ENCODE measurements at regions of chr16 and their contacts with region 1.

Region 1: GRCh38 chr16:11255737-11256660 is at the start of gene SOCS1:
- DNase-seq: peak; percentile 94
- ATAC-seq: peak; percentile 54
- H3K4me3 Mint-ChIP-seq: peak within 1 kb of the TSS; percentile 98
- H3K27ac Mint-ChIP-seq: peak within 1 kb of the TSS; percentile 98
- H3K4me1 Mint-ChIP-seq: peaks cover 46% of the 10 kb centered on the region
- H3K27me3 Mint-ChIP-seq: no peaks in the 10 kb centered on the region
- total RNA-seq, gene SOCS1: 100.0 to 103 TPM

Region 2: GRCh38 chr16:10957771-10958486 is 298.1 kb before region 1 on chr16:
- CTCF ChIA-PET with region 1: interaction called, 34 read pairs
- POLR2A ChIA-PET with region 1: interaction called, 30 read pairs
- intact Hi-C with region 1: no loop called
- DNase-seq: peak; percentile 51
- ATAC-seq: peak; percentile 82
- H3K4me3 Mint-ChIP-seq: no peak overlapping the region
- H3K27ac Mint-ChIP-seq: peak overlapping the region; percentile 88
- H3K4me1 Mint-ChIP-seq: peaks cover 68% of the 10 kb centered on the region
- H3K27me3 Mint-ChIP-seq: no peaks in the 10 kb centered on the region

Region 3: GRCh38 chr16:11051879-11052808 is 203.9 kb before region 1 on chr16:
- CTCF ChIA-PET with region 1: interaction called, 4 read pairs
- POLR2A ChIA-PET with region 1: interaction called, 25 read pairs
- intact Hi-C with region 1: loop called (anchors 1 to 2 kb)
- DNase-seq: peak; percentile 85
- ATAC-seq: peak; percentile 89
- H3K4me3 Mint-ChIP-seq: peak overlapping the region; percentile 7
- H3K27ac Mint-ChIP-seq: peak overlapping the region; percentile 75
- H3K4me1 Mint-ChIP-seq: peaks cover 61% of the 10 kb centered on the region
- H3K27me3 Mint-ChIP-seq: no peaks in the 10 kb centered on the region

Region 4: DNA sequence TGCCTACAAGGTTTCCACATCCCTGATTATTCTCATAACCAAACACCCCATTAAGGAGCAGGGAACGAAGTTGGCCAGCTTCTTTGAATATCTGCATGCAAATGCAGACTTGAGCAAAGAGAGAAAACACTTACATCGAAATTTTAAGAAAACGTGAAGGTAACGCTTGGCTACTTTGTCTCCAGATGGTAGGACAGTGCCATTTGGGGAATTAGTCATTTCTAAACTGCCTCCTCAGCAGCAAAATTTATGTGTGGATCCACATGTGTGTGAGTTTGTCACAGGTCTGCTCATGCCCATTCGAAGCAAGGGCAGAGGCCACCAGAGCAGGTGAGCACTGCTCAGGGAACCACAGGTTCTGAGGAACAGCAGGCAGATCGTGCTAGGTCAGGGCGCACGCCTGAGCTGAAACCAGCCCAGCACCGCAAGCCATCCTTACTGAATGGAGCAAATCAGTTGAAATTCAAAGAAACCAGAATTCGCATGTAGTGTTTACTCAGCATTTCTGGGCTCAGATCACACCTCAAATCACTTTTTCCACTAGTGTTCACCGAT is 80.1 kb before region 1 on chr16:
- CTCF ChIA-PET with region 1: no interaction called
- POLR2A ChIA-PET with region 1: no interaction called
- intact Hi-C with region 1: loop called in 1 of 2 experiments (anchors 2 kb)
- DNase-seq: peak; percentile 68
- ATAC-seq: peak; percentile 86
- H3K4me3 Mint-ChIP-seq: no peak overlapping the region
- H3K27ac Mint-ChIP-seq: peak overlapping the region; percentile 90
- H3K4me1 Mint-ChIP-seq: peaks cover 41% of the 10 kb centered on the region
- H3K27me3 Mint-ChIP-seq: no peaks in the 10 kb centered on the region

Region 5: DNA sequence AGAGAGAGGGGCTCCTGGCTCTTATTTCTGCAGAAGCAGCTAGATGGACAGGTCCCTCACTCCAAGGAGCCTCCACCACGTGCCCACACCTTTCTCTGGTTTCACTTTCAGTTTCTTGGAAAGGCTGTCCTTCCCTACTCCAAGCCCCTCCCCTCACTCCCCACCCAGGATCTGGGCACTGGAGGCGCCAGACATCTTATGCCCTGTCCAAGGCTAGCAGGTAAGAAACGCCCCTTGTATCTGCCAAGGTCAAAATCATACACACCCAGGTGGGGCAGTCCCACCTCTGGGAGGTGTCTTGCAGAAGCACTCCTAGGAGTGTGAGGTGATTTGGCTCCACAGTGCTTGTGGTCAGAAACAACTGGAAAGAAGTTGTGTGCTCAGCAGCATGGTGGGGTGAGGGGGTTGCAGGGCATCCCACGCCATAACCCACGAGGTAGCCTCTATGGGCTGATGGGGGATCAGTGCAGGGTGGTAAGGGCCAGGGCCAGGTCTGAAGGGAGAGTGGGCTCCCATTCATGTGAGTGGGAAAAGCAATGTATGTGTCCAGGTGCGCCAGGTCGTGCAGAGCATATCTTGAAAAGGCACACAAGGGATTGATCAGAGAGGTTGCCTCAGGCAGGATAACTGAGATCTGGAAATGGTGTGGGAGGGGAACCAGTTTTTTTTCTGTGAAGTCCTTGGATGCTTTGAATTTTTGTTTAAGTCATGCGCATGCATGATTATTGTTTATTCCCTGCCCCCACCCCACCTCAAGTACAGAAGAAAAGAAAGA is 56.9 kb after region 1 on chr16:
- CTCF ChIA-PET with region 1: no interaction called
- POLR2A ChIA-PET with region 1: interaction called, 4 read pairs
- intact Hi-C with region 1: loop called (anchors 2 to 5 kb)
- DNase-seq: peak; percentile 47
- ATAC-seq: peak; percentile 24
- H3K4me3 Mint-ChIP-seq: no peak overlapping the region
- H3K27ac Mint-ChIP-seq: peak overlapping the region; percentile 43
- H3K4me1 Mint-ChIP-seq: peaks cover 38% of the 10 kb centered on the region
- H3K27me3 Mint-ChIP-seq: no peaks in the 10 kb centered on the region

Region 6: DNA sequence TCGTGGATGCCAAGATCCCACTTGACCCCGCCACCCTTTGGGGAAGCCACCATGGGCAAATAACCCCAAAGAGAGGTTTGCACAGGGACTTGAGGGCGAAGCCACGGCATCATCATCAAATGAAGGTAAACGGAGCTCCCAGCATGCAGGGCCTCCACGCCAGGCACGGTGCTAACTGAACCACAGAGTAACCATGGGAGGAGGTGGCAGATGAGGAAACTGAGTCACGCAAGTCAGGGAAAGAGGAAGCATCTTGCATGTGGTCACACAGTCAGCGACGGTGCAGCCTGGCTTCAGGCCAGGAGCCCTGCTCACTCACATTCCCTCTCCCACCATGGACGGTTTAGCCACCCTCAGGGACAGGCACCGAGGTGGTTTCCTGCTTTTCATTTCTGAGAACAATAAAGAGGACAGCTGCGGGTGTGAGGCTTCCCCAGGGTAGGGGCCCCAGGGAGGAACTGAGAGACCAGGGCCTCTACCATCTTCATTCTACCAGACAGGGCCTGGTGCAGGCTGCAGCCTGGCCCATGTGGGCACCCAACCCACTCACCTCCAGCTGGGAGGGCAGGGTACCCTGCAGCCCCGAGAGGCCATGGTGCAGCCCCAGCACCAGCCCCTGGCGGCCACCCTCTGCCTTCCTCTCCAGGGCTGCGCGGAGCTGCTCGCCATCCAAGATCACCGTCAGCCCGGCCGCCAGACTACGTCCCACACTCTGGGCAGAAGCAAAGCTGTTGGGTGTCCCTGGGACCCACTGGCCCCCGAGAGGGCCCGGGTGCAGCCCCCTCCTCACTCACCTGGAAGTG is 167.5 kb after region 1 on chr16:
- CTCF ChIA-PET with region 1: no interaction called
- POLR2A ChIA-PET with region 1: no interaction called
- intact Hi-C with region 1: no loop called
- DNase-seq: no peak
- ATAC-seq: no peak
- H3K4me3 Mint-ChIP-seq: no peak overlapping the region
- H3K27ac Mint-ChIP-seq: no peak overlapping the region
- H3K4me1 Mint-ChIP-seq: no peaks in the 10 kb centered on the region
- H3K27me3 Mint-ChIP-seq: no peaks in the 10 kb centered on the region

Region 7: DNA sequence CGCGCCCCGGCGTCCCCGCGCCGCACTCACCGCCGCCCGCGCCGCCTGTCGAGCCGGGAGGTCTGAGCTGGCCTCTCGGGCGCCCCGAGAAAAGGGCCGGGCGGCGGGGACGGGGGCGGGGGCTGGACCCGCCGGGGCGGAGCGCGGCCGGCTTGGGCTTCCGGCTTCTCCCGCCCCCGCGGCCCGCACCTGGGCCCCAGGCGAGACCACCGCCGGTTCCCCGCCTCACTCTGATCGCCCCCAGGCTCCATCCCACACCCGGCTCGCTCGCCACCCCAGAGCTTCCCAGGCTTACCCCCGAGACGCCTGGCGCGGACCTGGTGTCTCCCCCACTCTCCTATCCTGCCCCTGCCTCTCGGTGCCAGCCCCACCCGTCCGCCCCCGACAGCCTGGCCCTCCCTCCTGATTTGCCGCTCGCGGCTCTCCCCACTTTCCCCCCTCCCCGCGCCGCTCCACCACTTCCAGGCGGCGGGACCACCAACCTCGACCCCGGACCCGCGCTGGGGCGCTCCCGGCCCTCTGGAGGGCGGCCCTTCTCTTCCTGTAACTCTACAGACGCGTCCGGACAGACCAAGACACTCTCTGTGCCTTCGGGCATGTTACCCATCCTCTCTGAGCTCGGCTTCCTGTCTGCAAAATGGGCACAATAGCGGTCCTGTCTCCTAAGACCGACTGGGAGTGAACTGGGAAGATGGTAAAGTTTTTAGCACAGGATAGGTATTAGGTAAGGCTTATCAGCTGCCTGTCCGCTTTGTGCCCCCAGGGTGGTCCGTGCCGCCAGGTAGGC is 331.1 kb after region 1 on chr16 and contains the start of gene LITAF:
- CTCF ChIA-PET with region 1: no interaction called
- POLR2A ChIA-PET with region 1: no interaction called
- intact Hi-C with region 1: loop called in 1 of 2 experiments (anchors 5 kb)
- DNase-seq: peak; percentile 74
- ATAC-seq: peak; percentile 53
- H3K4me3 Mint-ChIP-seq: peak within 1 kb of the TSS; percentile 89
- H3K27ac Mint-ChIP-seq: peak within 1 kb of the TSS; percentile 90
- H3K4me1 Mint-ChIP-seq: peaks cover 32% of the 10 kb centered on the region
- H3K27me3 Mint-ChIP-seq: no peaks in the 10 kb centered on the region
- total RNA-seq, gene LITAF: 99.0 to 116 TPM